WTC11 (cell line): ENCODE measurements at regions of chr22 and their contacts with region 1.

Region 1: GRCh38 chr22:41517172-41518047 is 26.9 kb downstream of the POLR3H start:
- DNase-seq: peak; percentile 86
- ATAC-seq: peak; percentile 38
- H3K4me3 Mint-ChIP-seq: no peak overlapping the region
- H3K27ac Mint-ChIP-seq: no peak overlapping the region
- H3K4me1 Mint-ChIP-seq: peaks cover 14% of the 10 kb centered on the region
- H3K27me3 Mint-ChIP-seq: no peaks in the 10 kb centered on the region
- CTCF ChIP-seq: peak; percentile 91

Region 2: GRCh38 chr22:41448189-41448808 is 69.1 kb before region 1 on chr22:
- CTCF ChIA-PET with region 1: interaction called, 11 read pairs
- POLR2A ChIA-PET with region 1: interaction called, 7 read pairs
- DNase-seq: peak; percentile 94
- ATAC-seq: peak; percentile 74
- H3K4me3 Mint-ChIP-seq: peak overlapping the region; percentile 96
- H3K27ac Mint-ChIP-seq: peak overlapping the region; percentile 99
- H3K4me1 Mint-ChIP-seq: peaks cover 13% of the 10 kb centered on the region
- H3K27me3 Mint-ChIP-seq: no peaks in the 10 kb centered on the region
- CTCF ChIP-seq: no peak

Region 3: DNA sequence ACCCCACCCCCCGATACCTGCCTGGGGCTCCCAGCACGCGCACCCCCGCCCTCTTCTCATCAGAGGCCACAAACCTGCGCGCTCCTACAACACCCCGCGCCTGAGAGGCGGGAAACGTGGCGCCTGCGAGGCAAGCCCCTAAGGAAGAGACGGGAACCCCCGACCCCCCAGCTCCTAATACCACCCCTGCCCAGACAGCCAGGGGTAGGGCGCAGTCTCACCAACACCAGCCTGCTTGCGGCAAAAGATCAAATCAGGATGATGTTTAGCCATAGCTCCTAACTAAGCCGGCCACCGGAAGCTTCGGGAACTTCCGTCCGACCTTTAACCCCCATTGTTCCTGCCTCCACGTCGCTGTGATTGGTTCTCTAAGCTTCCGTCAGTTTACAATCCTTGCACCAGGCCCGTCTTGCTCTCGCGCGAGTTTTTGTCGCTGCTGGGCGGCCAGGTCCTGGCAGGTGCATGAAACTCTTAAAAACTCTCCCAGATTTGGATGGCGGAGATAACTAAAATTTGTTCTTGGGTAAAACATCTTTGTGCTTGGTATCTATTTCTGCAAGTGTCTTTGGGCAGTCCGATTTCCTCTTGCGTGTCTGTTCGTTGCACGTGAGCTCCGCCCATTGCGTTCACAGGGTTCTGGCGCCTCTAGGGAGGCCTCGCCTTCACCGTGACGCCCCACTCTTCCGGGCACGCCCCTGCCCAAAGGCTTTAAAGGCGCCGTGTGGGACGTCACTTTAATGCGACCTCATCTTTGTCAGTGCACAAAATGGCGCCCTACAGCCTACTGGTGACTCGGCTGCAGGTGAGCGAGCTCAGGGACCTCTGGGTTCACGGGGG is 48.8 kb before region 1 on chr22 and contains the starts of genes ACO2 and PHF5A:
- CTCF ChIA-PET with region 1: interaction called, 26 read pairs
- POLR2A ChIA-PET with region 1: interaction called, 4 read pairs
- DNase-seq: peak; percentile 98
- ATAC-seq: peak; percentile 94
- H3K4me3 Mint-ChIP-seq: peak within 1 kb of the TSS; percentile 96
- H3K27ac Mint-ChIP-seq: peak within 1 kb of the TSS; percentile 100
- H3K4me1 Mint-ChIP-seq: peaks cover 25% of the 10 kb centered on the region
- H3K27me3 Mint-ChIP-seq: no peaks in the 10 kb centered on the region; the same call in 1 of the 2 replicates
- CTCF ChIP-seq: no peak
- total RNA-seq, gene ACO2: 98.3 to 104 TPM (median 99.3 TPM) in 3 replicates
- total RNA-seq, gene PHF5A: 93.1 to 99.6 TPM (median 97.9 TPM) in 3 replicates

Region 4: GRCh38 chr22:41479671-41480396 is 37.6 kb before region 1 on chr22:
- CTCF ChIA-PET with region 1: interaction called, 27 read pairs
- POLR2A ChIA-PET with region 1: no interaction called
- DNase-seq: peak; percentile 15
- ATAC-seq: peak; percentile 48
- H3K4me3 Mint-ChIP-seq: no peak overlapping the region
- H3K27ac Mint-ChIP-seq: peak overlapping the region; percentile 14
- H3K4me1 Mint-ChIP-seq: peaks cover 40% of the 10 kb centered on the region
- H3K27me3 Mint-ChIP-seq: no peaks in the 10 kb centered on the region
- CTCF ChIP-seq: no peak

Region 5: GRCh38 chr22:41532908-41533825 is 15.8 kb after region 1 on chr22:
- CTCF ChIA-PET with region 1: interaction called, 38 read pairs
- POLR2A ChIA-PET with region 1: no interaction called
- DNase-seq: peak; percentile 87
- ATAC-seq: peak; percentile 79
- H3K4me3 Mint-ChIP-seq: no peak overlapping the region
- H3K27ac Mint-ChIP-seq: peak overlapping the region; percentile 82
- H3K4me1 Mint-ChIP-seq: peaks cover 11% of the 10 kb centered on the region
- H3K27me3 Mint-ChIP-seq: no peaks in the 10 kb centered on the region
- CTCF ChIP-seq: peak; percentile 74

Region 6: DNA sequence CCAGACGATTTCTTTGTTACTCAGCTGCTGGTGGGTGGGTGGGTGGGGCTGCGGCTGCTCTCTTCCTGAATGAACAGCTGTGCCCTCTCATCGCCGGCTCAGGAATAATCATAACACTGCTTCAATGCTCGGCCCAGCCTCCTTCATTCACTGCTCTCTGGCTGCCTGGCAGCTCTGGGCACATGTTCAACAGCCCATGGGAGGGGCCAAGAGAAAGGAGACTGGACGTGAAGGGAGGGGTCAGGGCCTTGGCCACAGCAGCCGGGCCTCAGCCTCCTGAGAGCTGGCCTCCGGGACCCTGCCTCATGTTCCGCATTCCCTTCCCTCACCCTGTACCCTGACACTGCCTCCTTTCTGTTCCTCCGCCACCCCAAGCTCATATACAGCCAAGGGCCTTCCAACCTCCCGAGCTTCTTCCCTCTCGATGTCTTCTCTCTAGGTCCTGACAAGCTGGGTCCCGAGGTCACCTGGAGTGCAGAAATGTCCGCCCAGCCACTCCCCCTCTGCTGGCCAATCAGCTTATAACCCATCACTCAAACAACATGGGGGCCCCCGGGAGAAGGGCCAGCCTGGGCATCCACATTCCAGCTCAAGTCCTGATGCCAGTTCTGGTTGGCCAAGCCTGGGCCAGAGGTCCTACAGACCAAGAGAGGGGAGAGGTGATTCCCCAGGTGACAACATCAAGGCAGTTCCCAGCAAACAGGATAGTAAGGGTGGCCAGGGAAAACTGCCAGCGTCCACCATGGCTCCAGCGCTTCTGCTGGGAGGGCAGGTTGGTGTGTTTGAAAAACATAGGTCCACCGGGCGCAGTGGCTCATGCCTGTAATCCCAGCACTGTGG is 40.2 kb after region 1 on chr22:
- CTCF ChIA-PET with region 1: interaction called, 10 read pairs
- POLR2A ChIA-PET with region 1: no interaction called
- DNase-seq: peak; percentile 39
- ATAC-seq: peak; percentile 16; the same call in 1 of the 2 replicates
- H3K4me3 Mint-ChIP-seq: no peak overlapping the region
- H3K27ac Mint-ChIP-seq: no peak overlapping the region; the same call in 1 of the 2 replicates
- H3K4me1 Mint-ChIP-seq: peaks cover 37% of the 10 kb centered on the region
- H3K27me3 Mint-ChIP-seq: no peaks in the 10 kb centered on the region
- CTCF ChIP-seq: no peak